Ascending aorta (tissue), 2 donors: ENCODE measurements at regions of chr1 and their contacts with region 1.

Region 1: GRCh38 chr1:201692555-201693394 is 136.2 kb upstream of the IPO9 start:
- DNase-seq: no peak
- H3K4me3 ChIP-seq: no peak overlapping the region
- H3K27ac ChIP-seq: no peak overlapping the region
- H3K4me1 ChIP-seq: peaks cover 8 to 16% of the 10 kb centered on the region in 2 donors
- H3K27me3 ChIP-seq: no peaks in the 10 kb centered on the region
- CTCF ChIP-seq: no peak

Region 2: DNA sequence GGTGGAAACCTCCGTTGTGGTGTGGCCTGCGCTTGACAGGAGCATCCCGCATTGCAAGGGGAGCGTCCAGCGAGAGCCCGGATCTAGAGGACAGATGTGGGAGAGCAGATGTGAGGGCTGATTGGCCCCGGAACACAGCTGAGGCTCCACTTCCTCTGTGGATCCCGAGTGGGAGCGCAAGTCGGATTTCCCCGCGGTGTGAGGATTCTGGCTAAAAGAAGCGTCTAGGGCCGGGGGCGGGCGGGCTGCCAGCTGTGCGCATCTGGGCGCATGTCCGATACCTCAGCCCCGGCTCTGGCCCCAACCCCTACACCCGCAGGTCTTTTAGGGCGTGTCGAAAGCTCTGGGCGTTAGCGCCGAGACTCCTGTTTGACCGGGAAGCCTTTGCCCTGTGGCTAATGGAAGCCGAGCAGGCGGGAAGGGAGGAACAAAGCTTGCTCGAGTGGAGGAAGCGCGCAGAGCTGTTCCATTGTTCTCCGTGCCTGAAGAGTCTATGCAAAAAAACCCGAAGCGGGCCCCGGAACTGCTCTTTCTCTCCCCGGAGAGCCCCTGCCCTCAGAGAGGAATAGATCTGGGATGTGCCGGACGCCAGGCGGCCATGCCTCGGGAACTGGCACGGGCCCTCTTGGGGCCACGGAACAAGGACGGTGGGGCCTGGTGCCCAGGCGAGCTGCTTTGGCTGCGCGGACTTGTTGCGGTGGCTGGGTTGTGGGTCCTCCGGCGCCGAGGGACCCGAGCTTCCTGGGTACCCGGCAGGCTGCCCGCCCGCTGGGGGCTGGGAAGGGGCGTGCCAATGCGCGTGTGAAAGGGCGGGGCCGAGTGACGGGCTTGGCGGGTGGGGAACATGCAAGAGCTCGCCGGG is 42.8 kb before region 1 on chr1:
- intact Hi-C with region 1: loop called (anchors 5 kb)
- DNase-seq: peak in 1 of 2 donors; percentile 80
- H3K4me3 ChIP-seq: peak overlapping the region; percentile 61 to 70
- H3K27ac ChIP-seq: peak overlapping the region; percentile 28 to 32
- H3K4me1 ChIP-seq: peaks cover 20 to 26% of the 10 kb centered on the region in 2 donors
- H3K27me3 ChIP-seq: no peaks in the 10 kb centered on the region
- CTCF ChIP-seq: no peak